ENCODE measurements at regions of chr14 and their contacts with region 1.

Region 1: DNA sequence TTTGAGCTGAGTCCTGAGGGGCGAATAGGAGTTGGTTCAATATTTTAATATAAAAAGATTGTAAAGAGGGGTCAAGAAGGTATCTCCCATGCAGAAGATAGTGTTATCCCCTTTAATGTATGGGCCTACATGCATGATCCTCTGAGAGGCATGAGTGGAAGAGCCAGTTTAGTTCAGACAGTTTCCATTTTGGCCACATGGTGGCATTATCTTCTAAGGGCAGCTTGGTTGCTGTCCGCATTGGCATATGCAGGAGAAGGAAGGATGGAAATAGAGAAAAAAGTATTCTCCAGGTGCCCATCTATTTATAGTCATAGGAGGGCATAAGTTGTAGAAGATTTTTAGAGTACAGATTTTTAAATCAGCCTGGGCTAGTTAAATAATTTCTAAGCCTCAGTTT is 5.4 kb downstream of the SAMD4A start:
- DNase-seq: peak; percentile 54
- ATAC-seq: no peak
- H3K4me3 Mint-ChIP-seq: no peak overlapping the region
- H3K27ac Mint-ChIP-seq: no peak overlapping the region
- H3K4me1 Mint-ChIP-seq: peaks cover 15% of the 10 kb centered on the region
- H3K27me3 Mint-ChIP-seq: peaks cover 28% of the 10 kb centered on the region

Region 2: DNA sequence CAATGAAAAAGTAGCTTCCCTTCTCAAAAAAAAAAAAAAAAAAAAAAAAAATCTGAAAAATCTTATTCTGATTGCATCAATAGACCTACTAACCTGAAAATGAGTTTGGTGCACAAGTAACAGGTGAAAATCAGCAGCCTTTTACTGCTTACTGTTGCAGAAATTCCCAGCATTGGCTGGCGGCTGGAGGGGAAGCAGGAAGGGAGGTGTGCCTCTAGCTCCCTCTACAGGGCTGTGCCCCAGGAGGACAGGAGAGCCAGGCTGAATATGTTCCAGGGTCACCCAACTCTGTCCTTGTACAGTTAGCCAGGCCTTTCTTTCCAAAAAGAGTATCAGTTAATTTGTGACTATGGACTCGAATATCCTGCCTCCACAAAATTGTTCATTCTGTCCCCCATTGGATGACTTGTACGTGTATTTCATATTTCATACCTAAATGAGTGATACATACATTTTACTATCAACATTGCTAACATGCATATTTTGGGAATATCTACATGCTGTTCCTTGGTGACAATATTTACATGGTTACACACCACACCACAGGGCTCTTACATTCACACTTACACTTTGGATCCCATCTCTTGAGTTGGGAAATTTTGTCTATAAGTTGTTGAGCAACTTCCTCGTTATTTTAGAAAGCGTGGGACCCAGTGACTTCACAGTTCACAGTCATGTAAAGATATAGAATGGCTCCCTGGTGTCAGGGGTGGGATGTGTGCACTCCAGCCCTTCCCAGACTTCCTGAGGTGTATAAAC is 119.4 kb after region 1 on chr14:
- CTCF ChIA-PET with region 1: interaction called, 4 read pairs
- POLR2A ChIA-PET with region 1: no interaction called
- intact Hi-C with region 1: loop called in 1 of 2 experiments (anchors 1 kb)
- DNase-seq: peak; percentile 76
- ATAC-seq: peak; percentile 78
- H3K4me3 Mint-ChIP-seq: no peak overlapping the region
- H3K27ac Mint-ChIP-seq: no peak overlapping the region
- H3K4me1 Mint-ChIP-seq: peaks cover 12% of the 10 kb centered on the region
- H3K27me3 Mint-ChIP-seq: peaks cover 26% of the 10 kb centered on the region

Region 3: DNA sequence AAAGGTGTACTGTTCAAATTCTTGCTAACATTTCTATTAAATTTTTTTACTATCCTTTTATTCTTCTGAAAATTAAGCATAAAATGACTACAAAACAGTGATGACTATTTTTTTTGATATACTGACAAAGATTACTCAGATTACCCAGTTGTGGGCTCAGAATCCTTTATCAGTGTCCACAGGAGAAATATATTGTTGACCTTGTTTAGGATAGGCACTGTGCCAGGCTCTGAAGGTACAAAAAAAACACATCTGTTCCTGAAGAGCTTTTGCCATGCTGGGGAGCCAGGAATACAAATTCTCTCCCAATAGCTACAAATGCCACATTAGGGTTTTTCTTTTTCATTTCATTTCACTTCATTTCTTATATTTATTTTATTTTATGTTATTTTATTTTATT is 357.2 kb after region 1 on chr14:
- CTCF ChIA-PET with region 1: no interaction called
- POLR2A ChIA-PET with region 1: no interaction called
- intact Hi-C with region 1: no loop called
- DNase-seq: no peak
- ATAC-seq: no peak
- H3K4me3 Mint-ChIP-seq: no peak overlapping the region
- H3K27ac Mint-ChIP-seq: no peak overlapping the region
- H3K4me1 Mint-ChIP-seq: peaks cover 3% of the 10 kb centered on the region
- H3K27me3 Mint-ChIP-seq: no peaks in the 10 kb centered on the region

Measured in activated CD4-positive, alpha-beta T cell treated with anti-CD3 and anti-CD28 coated beads for 36 hours (primary cell).